RWPE1 (cell line): ENCODE measurements at regions of chr6 and their contacts with region 1.

Region 1: DNA sequence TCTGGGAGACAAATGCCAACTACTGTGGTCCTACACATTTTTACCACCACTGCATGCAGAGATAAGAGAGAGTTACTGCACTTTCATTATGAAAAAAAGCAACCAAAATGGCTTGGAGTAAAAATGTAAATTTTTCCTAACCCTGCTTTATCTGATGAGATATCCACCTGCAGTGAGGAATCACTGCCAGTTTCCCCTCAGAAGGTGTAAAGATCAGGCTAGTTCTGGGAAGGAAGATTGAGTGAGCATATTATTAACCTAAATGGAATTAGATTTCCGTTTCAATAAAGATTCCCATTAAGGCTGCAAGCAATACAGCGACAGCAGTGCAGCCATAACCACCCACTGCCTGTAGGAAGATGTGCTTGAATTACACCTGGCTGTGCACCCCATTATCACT is 84.9 kb downstream of the QRSL1 start:
- DNase-seq: no peak
- H3K27ac ChIP-seq: no peak overlapping the region
- CTCF ChIP-seq: no peak

Region 2: DNA sequence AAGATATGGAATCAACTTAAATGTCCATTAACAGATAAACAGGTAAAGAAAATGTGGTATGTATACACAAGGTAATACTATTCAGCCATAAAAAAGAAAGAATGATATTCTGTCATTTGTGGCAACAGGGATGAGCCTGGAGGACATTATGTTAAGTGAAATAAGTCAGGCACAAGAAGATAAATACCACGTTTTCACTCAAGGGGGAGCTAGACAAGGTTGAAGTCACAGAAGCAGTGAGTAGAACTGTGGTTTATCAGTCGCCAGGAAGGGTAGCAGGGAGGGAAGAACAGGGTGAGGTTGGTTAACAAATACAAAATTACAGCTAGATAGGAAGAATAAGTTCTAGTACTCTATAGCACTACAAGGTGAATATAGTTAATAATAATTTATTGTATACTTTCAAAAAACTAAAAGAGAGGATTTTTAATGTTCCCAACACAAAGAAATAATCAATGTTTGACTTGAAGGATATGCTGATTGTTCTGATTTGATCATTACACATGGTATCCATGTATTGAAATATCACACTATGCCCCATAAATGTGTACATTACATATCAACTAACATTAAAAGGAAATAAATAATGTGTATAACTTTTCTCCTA is 106.1 kb before region 1 on chr6:
- CTCF ChIA-PET with region 1: interaction called, 11 read pairs
- POLR2A ChIA-PET with region 1: no interaction called
- DNase-seq: peak; percentile 41
- H3K27ac ChIP-seq: no peak overlapping the region
- CTCF ChIP-seq: peak; percentile 42

Region 3: GRCh38 chr6:106858653-106859092 is 144.4 kb after region 1 on chr6:
- CTCF ChIA-PET with region 1: no interaction called
- POLR2A ChIA-PET with region 1: no interaction called
- DNase-seq: peak; percentile 35
- H3K27ac ChIP-seq: no peak overlapping the region
- CTCF ChIP-seq: no peak